ENCODE measurements at regions of chr12 and their contacts with region 1.

Region 1: GRCh38 chr12:65501935-65502334 is 223.5 kb downstream of the MSRB3 start:
- DNase-seq: no peak
- ATAC-seq: no peak
- H3K4me3 ChIP-seq: no peak overlapping the region
- H3K27ac ChIP-seq: no peak overlapping the region
- H3K4me1 ChIP-seq: peaks cover 22% of the 10 kb centered on the region
- H3K27me3 ChIP-seq: no peaks in the 10 kb centered on the region
- CTCF ChIP-seq: no peak

Region 2: GRCh38 chr12:65449400-65449799 is 52.5 kb before region 1 on chr12:
- CTCF ChIA-PET with region 1: no interaction called
- POLR2A ChIA-PET with region 1: no interaction called
- intact Hi-C with region 1: loop called (anchors 1 kb)
- DNase-seq: peak; percentile 67
- ATAC-seq: peak; percentile 91
- H3K4me3 ChIP-seq: no peak overlapping the region
- H3K27ac ChIP-seq: peak overlapping the region; percentile 64
- H3K4me1 ChIP-seq: peaks cover 17% of the 10 kb centered on the region
- H3K27me3 ChIP-seq: no peaks in the 10 kb centered on the region
- CTCF ChIP-seq: no peak

Region 3: GRCh38 chr12:65631621-65632111 is 129.7 kb after region 1 on chr12:
- CTCF ChIA-PET with region 1: no interaction called
- POLR2A ChIA-PET with region 1: no interaction called
- intact Hi-C with region 1: no loop called
- DNase-seq: peak; percentile 99
- ATAC-seq: peak; percentile 49
- H3K4me3 ChIP-seq: no peak overlapping the region; the same call in 1 of the 2 replicates
- H3K27ac ChIP-seq: peak overlapping the region; percentile 99
- H3K4me1 ChIP-seq: peaks cover 65% of the 10 kb centered on the region
- H3K27me3 ChIP-seq: no peaks in the 10 kb centered on the region
- CTCF ChIP-seq: no peak

Measured in PC-3 (cell line).